ENCODE measurements at regions of chr17 and their contacts with region 1.

Region 1: DNA sequence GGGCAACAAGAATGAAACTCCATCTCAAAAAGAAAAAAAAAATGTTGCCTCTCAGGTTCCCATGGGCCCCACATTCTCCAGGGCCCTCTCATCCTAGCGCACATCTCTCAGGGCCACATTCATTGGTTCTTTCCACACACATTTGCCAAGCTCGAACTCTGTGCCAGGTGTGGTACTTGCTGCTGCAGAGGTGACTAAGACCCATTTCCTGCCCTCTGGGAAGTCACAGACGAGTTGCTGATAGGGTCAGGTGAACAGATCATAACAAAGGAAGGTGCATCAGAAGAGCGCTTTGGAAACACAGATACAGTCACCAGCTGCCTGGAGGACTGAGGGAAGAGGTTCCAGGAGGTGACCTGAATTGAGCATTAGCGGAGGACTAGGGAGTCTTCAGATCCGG is 1.0 kb downstream of the GSDMA start:
- DNase-seq: no peak
- ATAC-seq: no peak
- H3K4me3 ChIP-seq: no peak overlapping the region
- H3K27ac ChIP-seq: no peak overlapping the region
- H3K4me1 ChIP-seq: no peaks in the 10 kb centered on the region
- H3K27me3 ChIP-seq: no peaks in the 10 kb centered on the region
- CTCF ChIP-seq: no peak
- POLR2A ChIP-seq: no peak

Region 2: GRCh38 chr17:39861235-39861634 is 102.6 kb before region 1 on chr17:
- intact Hi-C with region 1: no loop called
- DNase-seq: no peak
- ATAC-seq: no peak
- H3K4me3 ChIP-seq: no peak overlapping the region
- H3K27ac ChIP-seq: no peak overlapping the region
- H3K4me1 ChIP-seq: no peaks in the 10 kb centered on the region
- H3K27me3 ChIP-seq: no peaks in the 10 kb centered on the region
- CTCF ChIP-seq: no peak
- POLR2A ChIP-seq: no peak

Region 3: DNA sequence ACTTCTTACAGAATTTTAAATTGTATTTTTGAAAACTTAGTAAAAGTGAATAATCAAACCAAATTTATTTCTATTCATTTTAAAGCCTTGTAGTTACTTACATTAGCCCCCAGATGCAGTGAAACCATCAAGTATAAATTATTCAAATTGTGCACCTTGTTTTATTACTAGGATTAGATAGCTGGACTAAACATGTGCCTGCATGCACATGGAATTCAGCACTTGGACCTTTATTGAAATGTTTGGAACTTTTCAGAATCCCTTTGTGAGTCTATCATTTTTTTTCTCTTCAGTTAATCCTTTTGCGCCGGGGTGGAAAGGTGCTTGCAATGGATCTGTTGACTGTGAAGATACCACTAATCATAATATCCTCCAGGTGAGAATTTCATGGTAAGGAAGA is 91.1 kb before region 1 on chr17:
- intact Hi-C with region 1: loop called in 1 of 2 experiments (anchors 10 kb)
- DNase-seq: no peak
- ATAC-seq: peak; percentile 58 to 77 (median 62)
- H3K4me3 ChIP-seq: no peak overlapping the region
- H3K27ac ChIP-seq: no peak overlapping the region
- H3K4me1 ChIP-seq: no peaks in the 10 kb centered on the region
- H3K27me3 ChIP-seq: no peaks in the 10 kb centered on the region
- CTCF ChIP-seq: peak; percentile 19 to 53 (median 38)
- POLR2A ChIP-seq: no peak

Measured in right lobe of liver (tissue), 6 donors.